Activated CD4-positive, alpha-beta memory T cell treated with anti-CD3 and anti-CD28 coated beads for 36 hours (primary cell): ENCODE measurements at regions of chr1 and their contacts with region 1.

Region 1: DNA sequence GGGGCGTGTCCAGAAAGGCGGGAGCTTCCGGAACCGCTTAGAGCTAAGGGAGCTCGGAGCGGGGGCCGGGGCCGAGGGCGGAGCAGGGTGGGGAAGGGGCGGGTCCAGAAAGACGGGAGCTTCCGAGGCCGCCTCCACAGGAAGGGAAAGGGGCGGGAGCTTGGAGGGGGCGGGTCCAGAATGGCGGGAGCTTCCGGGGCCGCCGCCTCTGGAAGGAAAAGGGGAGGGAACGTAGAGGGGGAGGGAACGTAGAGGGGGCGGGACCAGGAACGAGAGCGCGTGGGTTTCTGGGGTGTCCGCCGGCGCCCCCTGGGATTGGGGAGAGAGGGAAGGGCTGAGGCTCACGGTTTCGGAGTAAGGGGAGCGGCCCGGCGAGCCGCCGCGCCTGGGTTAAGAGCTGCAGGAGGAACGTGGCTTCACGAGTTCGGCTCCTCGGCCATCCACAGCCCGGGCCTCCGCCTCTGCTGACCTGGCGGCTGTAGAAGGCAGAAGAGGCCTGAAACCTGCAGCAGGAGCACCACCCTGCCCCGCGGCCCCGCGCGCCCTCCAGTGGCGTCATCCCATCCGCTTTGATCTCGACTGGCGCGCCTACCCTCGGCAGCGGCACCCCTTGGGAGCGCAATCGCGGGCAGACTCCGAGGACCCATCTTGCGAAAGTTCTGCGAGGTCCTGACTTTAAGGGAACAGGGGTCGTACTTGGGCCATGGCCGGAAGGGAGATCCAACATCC is 22.9 kb upstream of the HPDL start:
- DNase-seq: peak; percentile 100
- H3K4me3 Mint-ChIP-seq: peak overlapping the region; percentile 89
- H3K27ac Mint-ChIP-seq: peak overlapping the region; percentile 96
- H3K4me1 Mint-ChIP-seq: peaks cover 29% of the 10 kb centered on the region
- H3K27me3 Mint-ChIP-seq: no peaks in the 10 kb centered on the region

Region 2: DNA sequence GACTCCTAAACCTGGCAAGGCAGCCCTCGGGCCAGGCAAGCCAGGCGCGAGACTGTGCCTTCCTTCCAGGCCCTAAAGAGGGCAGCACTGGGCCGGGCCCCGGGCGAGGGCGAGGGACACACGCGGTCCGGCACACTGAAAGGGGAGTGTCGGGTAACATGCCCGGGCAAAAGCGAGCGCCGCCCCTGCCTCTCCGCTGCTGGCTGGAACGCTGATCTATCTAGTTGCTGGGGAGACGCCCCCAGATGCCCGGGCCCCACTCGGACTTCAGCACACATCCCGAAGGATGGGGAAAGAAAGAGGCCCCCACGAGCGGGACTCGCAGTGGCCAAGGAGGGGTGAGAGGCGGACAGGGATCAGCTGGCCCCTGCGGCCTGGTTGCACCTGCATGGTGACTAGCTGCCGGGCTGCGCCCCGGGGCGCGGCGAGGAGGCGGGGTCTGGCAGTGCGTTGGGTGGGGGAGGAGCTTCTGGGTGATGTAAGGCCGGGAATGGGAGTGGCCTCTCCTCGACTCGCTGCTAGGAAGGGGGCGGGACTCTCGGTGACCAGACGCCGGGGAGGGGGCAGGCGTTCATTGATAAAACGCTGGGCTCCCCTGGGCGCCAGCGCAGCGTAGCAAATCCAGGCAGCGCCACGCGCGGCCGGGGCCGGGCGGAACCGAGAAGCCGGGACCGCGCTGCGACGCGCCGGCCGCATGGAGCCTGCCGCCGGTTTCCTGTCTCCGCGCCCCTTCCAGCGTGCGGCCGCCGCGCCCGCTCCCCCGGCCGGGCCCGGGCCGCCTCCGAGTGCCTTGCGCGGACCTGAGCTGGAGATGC is 503.8 kb before region 1 on chr1 and contains the start of gene PLK3:
- CTCF ChIA-PET with region 1: interaction called, 4 read pairs
- POLR2A ChIA-PET with region 1: no interaction called
- intact Hi-C with region 1: loop called (anchors 10 kb)
- DNase-seq: peak; percentile 99
- H3K4me3 Mint-ChIP-seq: peak within 1 kb of the TSS; percentile 93
- H3K27ac Mint-ChIP-seq: peak within 1 kb of the TSS; percentile 95
- H3K4me1 Mint-ChIP-seq: peaks cover 34% of the 10 kb centered on the region
- H3K27me3 Mint-ChIP-seq: no peaks in the 10 kb centered on the region
- total RNA-seq, gene PLK3: 80.2 to 87.9 TPM

Region 3: GRCh38 chr1:45018599-45019230 is 285.0 kb before region 1 on chr1:
- CTCF ChIA-PET with region 1: interaction called, 259 read pairs
- POLR2A ChIA-PET with region 1: interaction called, 5 read pairs
- intact Hi-C with region 1: loop called (anchors 1 kb)
- DNase-seq: peak; percentile 75
- H3K4me3 Mint-ChIP-seq: no peak overlapping the region
- H3K27ac Mint-ChIP-seq: no peak overlapping the region
- H3K4me1 Mint-ChIP-seq: peaks cover 12% of the 10 kb centered on the region
- H3K27me3 Mint-ChIP-seq: no peaks in the 10 kb centered on the region

Region 4: DNA sequence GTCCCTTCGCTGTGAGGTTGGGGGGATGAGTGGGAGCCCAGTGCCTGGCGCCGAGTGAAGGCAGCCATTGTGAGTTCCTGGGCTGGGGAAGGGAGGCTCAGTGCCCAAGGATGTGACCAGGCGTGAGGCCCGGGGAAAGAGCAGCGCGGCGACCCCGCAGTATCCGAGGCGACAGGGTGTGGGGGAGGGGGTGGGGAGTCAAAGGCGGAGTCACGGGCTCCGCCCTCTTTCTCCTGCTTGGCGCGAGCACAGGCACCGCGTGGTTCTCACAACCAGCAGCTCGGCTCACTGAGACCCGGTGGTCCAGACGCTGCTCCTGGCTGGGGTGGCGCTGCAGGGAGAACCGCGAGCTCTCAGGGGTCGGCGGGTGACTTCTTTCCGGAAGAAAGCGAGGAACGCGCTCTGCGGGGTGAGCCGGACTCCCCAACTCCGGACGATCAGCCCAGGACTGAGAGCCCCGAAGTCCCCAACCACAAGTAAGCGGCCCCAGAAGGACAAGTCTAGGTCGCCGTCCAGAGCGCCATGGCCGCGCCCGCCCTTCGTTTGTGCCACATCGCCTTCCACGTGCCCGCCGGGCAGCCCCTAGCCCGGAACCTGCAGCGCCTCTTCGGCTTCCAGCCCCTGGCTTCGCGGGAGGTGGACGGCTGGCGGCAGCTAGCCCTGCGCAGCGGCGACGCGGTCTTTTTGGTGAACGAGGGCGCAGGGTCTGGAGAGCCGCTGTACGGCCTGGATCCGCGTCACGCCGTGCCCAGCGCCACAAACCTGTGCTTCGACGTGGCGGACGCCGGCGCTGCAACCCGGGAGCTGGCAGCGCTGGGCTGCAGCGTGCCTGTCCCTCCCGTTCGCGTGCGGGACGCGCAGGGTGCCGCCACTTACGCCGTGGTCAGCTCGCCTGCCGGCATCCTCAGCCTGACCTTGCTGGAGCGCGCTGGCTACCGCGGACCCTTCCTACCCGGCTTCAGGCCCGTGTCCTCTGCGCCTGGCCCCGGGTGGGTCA is 23.2 kb after region 1 on chr1 and contains the start of gene HPDL:
- CTCF ChIA-PET with region 1: interaction called, 16 read pairs
- POLR2A ChIA-PET with region 1: interaction called, 10 read pairs
- intact Hi-C with region 1: loop called (anchors 2 kb)
- DNase-seq: peak; percentile 77
- H3K4me3 Mint-ChIP-seq: peak within 1 kb of the TSS; percentile 76
- H3K27ac Mint-ChIP-seq: peak within 1 kb of the TSS; percentile 45
- H3K4me1 Mint-ChIP-seq: peaks cover 16% of the 10 kb centered on the region
- H3K27me3 Mint-ChIP-seq: no peaks in the 10 kb centered on the region
- total RNA-seq, gene HPDL: 12.7 to 14.3 TPM

Region 5: GRCh38 chr1:45375104-45376090 is 71.7 kb after region 1 on chr1:
- CTCF ChIA-PET with region 1: no interaction called
- POLR2A ChIA-PET with region 1: no interaction called
- intact Hi-C with region 1: no loop called
- DNase-seq: no peak
- H3K4me3 Mint-ChIP-seq: no peak overlapping the region
- H3K27ac Mint-ChIP-seq: no peak overlapping the region
- H3K4me1 Mint-ChIP-seq: peaks cover 2% of the 10 kb centered on the region
- H3K27me3 Mint-ChIP-seq: no peaks in the 10 kb centered on the region

Region 6: DNA sequence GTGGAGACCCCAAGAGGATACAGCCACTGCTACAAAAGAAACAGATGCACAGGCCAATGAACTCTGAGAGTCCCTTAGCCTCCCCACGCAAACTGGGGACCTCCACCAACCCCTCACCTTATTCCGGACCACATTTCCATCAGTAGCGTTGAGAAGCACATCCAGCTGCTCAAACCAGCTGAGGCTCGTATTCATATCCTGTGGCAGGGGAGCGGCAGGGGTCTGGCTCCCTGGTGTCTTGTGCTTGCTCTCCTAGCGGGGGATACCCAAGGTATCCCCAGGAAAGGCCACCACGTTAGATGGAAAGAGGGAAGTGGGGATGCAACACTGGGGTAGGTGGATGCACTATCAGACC is 195.6 kb after region 1 on chr1:
- CTCF ChIA-PET with region 1: interaction called, 3 read pairs
- POLR2A ChIA-PET with region 1: no interaction called
- intact Hi-C with region 1: loop called (anchors 1 kb)
- DNase-seq: peak; percentile 39
- H3K4me3 Mint-ChIP-seq: peak overlapping the region; percentile 95
- H3K27ac Mint-ChIP-seq: peak overlapping the region; percentile 83
- H3K4me1 Mint-ChIP-seq: peaks cover 30% of the 10 kb centered on the region
- H3K27me3 Mint-ChIP-seq: no peaks in the 10 kb centered on the region